ENCODE measurements at regions of chr2 and their contacts with region 1.

Region 1: DNA sequence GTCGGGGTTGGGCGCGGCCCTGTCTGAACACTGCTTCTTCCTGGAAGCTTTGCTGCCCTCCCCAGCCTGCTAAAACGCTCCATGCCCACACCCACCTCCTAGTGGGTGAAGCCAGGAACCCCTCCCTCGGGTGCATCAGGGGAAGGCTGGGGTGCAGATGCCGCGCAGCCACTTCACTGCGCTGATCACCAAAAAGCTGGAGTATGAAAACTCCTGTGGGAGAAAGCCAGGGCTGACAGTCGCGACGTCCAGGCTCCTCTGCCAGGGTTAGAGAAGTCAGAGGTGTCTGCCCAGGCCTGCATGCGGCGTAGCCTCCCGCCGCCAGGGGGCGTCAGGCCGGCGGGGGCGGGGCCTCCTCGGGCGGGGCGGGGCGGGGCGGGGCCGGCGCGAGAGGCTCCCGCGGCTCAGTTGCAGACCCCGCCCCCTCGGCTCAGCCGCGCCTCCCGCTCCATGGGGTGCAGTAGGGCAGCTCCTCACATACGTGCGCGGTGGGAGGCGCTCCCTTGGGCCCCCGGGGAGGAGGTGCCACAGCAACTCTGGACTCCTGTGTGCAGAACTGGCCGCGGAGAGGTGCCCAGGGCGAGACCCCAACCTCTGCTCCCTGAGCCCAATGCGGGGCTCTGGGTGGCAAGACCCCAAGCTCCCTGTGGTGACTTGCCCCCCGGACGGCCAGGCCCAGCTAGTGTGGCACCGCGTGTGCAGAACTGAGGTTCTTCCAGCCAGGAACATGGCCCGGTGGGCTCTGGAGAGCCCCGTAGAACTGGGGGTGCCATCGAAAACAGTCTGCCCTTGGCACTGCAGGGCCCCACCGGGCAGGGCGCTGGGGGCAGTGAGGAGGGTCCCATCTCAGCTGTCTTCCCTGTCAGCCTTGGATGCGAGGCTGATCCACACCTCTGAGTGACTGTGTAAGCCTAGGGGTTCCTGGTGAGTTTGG is 1.8 kb upstream of the RNPEPL1 start:
- DNase-seq: peak; percentile 76 to 95 (median 88)
- H3K4me3 ChIP-seq: peak overlapping the region; percentile 22 to 89 (median 77)
- H3K27ac ChIP-seq: peak overlapping the region; percentile 61 to 99 (median 92)
- H3K27me3 ChIP-seq: no peaks in the 10 kb centered on the region
- CTCF ChIP-seq: peak; percentile 53 to 98 (median 88)

Region 2: GRCh38 chr2:240586198-240586918 is 19.9 kb after region 1 on chr2 and contains the start of gene CAPN10:
- intact Hi-C with region 1: loop called (anchors 1 to 2 kb)
- DNase-seq: peak; percentile 97 to 99 (median 98)
- H3K4me3 ChIP-seq: peak within 1 kb of the TSS; percentile 60 to 100 (median 97)
- H3K27ac ChIP-seq: peak within 1 kb of the TSS; percentile 70 to 99 (median 96)
- H3K27me3 ChIP-seq: no peaks in the 10 kb centered on the region
- CTCF ChIP-seq: peak in 34 of 56 donors; percentile 6 to 64 (median 30)
- total RNA-seq, gene CAPN10: 25.6 to 70.0 (median 40.7) TPM

Region 3: GRCh38 chr2:240819858-240820606 is 253.6 kb after region 1 on chr2 and contains the start of gene KIF1A:
- intact Hi-C with region 1: loop called (anchors 5 kb)
- DNase-seq: peak; percentile 84 to 97 (median 92)
- H3K4me3 ChIP-seq: peak within 1 kb of the TSS; percentile 53 to 97 (median 86)
- H3K27ac ChIP-seq: peak within 1 kb of the TSS; percentile 40 to 97 (median 93)
- H3K27me3 ChIP-seq: peaks cover 0 to 8% (median 0%) of the 10 kb centered on the region in 45 donors
- CTCF ChIP-seq: peak in 2 of 56 donors; percentile 6 to 7
- total RNA-seq, gene KIF1A: 869 to 1,843 (median 1,153) TPM

Measured in dorsolateral prefrontal cortex (tissue), 120 donors.